H1 (cell line): ENCODE measurements at regions of chr2 and their contacts with region 1.

Region 1: DNA sequence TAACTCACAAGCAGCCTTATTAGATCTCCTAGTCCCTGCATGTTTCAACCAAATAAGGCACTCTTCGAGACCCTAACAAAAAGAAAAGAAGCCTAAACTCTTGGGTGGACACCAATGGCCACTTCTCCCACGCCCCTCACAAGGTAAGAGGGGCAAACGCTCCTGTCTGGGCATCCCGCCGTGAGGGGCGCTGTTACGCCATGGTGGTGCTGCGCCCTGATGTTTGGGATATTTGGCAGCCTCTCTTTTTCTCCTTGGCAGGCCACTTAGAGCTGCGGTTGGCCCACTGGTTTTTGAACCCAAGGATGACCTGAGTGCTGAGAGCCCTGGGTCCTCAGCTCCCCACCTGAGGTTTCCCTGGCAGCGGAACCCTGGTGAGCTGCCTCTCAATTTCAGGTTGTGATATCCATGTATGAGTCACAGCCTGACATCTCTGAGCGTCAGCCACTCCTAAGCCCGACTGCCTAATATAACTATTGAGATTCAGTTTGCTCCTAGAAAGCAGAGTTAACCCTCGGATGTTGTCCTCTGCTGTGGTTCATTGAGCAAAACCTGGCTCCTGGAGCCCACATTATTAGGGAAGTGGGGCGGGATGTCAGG is 103.3 kb downstream of the COL6A3 start:
- DNase-seq: no peak
- H3K4me3 ChIP-seq: no peak overlapping the region
- H3K27ac ChIP-seq: no peak overlapping the region
- H3K4me1 ChIP-seq: peaks cover 0 to 3% (median under 1%) of the 10 kb centered on the region in 4 experiments; a peak in 1 of 7 replicates
- H3K27me3 ChIP-seq: 0 out of 7 replicates have a peak, but pooled peaks cover 0 to 2% (median 0%) of the 10 kb centered on the region in 4 experiments
- CTCF ChIP-seq: peak in 2 of 3 experiments; percentile 6 to 23; a peak in 3 of 4 replicates
- EP300 ChIP-seq: no peak
- POLR2A ChIP-seq: no peak
- RAD21 ChIP-seq: peak; percentile 27 to 32; a peak in 3 of 4 replicates

Region 2: DNA sequence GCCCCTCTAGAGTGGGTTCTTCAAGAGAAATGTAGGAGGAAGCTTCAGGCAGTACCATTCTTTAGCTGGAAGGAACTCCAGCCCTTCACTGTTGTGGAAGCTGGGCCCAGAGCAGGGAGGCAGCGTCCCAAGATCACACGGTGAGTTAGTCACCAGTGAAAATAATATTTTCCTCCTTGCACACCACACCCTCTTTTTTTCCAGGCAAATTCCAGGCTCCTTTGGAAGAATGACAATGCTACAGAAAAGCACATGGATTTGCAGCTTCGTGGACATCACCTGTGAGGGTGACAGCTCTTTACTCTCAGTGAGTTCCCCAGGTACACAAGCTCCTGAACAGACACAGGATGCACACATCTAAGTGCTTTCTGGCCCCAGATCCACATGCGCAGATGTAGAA is 53.7 kb before region 1 on chr2:
- CTCF ChIA-PET with region 1: no interaction called
- POLR2A ChIA-PET with region 1: no interaction called
- DNase-seq: no peak
- H3K4me3 ChIP-seq: no peak overlapping the region
- H3K27ac ChIP-seq: no peak overlapping the region
- H3K4me1 ChIP-seq: peaks cover 0 to 4% (median 0%) of the 10 kb centered on the region in 4 experiments; a peak in 1 of 7 replicates
- H3K27me3 ChIP-seq: no peaks in the 10 kb centered on the region
- CTCF ChIP-seq: no peak
- EP300 ChIP-seq: no peak
- POLR2A ChIP-seq: no peak
- RAD21 ChIP-seq: no peak

Region 3: DNA sequence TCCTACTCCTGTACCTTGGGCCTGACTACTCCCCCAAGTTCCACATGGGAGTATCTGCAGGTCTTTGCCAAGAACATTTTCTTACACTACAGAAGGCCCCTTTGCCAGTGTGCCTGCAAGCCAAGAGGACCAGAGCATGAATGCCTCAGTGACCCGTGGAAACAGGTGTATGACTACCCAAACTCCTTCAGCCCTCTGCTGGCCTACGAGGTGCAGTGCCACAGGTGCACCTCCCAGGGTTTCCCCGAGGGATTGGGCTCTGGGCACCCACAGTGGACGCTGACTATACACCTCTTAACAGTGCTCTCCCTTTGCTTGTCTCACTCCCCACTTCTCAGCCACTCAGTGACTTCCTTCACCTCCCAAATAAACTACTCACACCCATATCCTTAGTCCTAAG is 11.9 kb after region 1 on chr2:
- CTCF ChIA-PET with region 1: interaction called, 32 read pairs
- POLR2A ChIA-PET with region 1: interaction called, 3 read pairs
- DNase-seq: peak in 1 of 2 experiments; percentile 63
- H3K4me3 ChIP-seq: no peak overlapping the region
- H3K27ac ChIP-seq: no peak overlapping the region
- H3K4me1 ChIP-seq: no peaks in the 10 kb centered on the region; a peak in 1 of 7 replicates
- H3K27me3 ChIP-seq: no peaks in the 10 kb centered on the region; a peak in 1 of 7 replicates
- CTCF ChIP-seq: peak; percentile 72 to 83 (median 82)
- EP300 ChIP-seq: no peak
- POLR2A ChIP-seq: no peak
- RAD21 ChIP-seq: peak; percentile 67 to 73

Region 4: GRCh38 chr2:237529452-237530402 is 219.1 kb after region 1 on chr2:
- CTCF ChIA-PET with region 1: no interaction called
- POLR2A ChIA-PET with region 1: no interaction called
- DNase-seq: no peak
- H3K4me3 ChIP-seq: no peak overlapping the region
- H3K27ac ChIP-seq: no peak overlapping the region
- H3K4me1 ChIP-seq: no peaks in the 10 kb centered on the region; a peak in 1 of 7 replicates
- H3K27me3 ChIP-seq: no peaks in the 10 kb centered on the region
- CTCF ChIP-seq: no peak
- EP300 ChIP-seq: no peak
- POLR2A ChIP-seq: no peak
- RAD21 ChIP-seq: no peak